ENCODE measurements at regions of chr11 and their contacts with region 1.

Region 1: DNA sequence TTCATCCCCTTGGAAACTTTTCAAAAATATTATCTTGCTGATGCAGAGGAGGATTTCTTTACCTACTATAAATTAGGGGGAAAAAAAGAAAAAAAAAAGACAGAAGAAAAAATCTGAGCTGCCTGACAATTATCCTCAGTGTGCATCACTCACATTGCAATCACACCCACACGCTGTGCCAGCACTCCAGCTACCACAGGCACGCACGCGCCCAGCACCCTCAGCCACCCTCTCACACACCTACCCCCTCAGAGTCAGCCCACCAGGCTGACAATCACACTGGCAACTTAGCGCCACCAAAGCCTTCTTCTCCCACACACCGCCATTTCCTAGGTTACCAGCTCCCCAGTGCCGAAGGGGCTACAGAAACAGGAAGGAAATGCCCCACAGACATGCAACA is 236.1 kb downstream of the KCNA4 start:
- DNase-seq: peak in 4 of 5 donors; percentile 14 to 65 (median 25)
- ATAC-seq: peak; percentile 66 to 82 (median 77)
- H3K4me3 ChIP-seq: peak overlapping the region in 3 of 12 donors; percentile 25 to 33 (median 32)
- H3K27ac ChIP-seq: peak overlapping the region; percentile 17 to 78 (median 67)
- H3K4me1 ChIP-seq: peaks cover 0 to 37% (median 0%) of the 10 kb centered on the region in 12 donors
- H3K27me3 ChIP-seq: no peaks in the 10 kb centered on the region
- CTCF ChIP-seq: no peak
- POLR2A ChIP-seq: no peak

Region 2: DNA sequence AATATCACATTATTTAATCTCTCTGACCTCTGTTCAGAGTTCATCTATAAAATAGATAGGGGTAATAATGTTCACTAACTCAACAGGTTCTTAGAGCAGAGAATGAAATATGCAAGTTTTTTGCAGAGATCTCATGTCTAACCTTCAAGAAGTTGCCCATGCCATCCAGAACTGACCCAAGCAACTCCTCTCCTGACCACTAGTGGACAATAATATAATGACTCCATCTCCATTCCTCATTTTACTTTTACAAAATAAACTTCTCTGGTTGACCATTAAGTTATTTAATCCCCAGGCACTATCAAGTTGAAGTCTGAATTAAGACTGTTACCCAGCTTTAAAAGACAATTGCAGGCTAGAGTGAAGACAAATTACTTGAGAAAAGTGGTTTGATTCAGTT is 146.5 kb before region 1 on chr11:
- intact Hi-C with region 1: no loop called
- DNase-seq: no peak
- ATAC-seq: no peak
- H3K4me3 ChIP-seq: no peak overlapping the region
- H3K27ac ChIP-seq: no peak overlapping the region
- H3K4me1 ChIP-seq: no peaks in the 10 kb centered on the region
- H3K27me3 ChIP-seq: no peaks in the 10 kb centered on the region
- CTCF ChIP-seq: peak in 10 of 12 donors; percentile 8 to 44 (median 26)
- POLR2A ChIP-seq: no peak

Region 3: DNA sequence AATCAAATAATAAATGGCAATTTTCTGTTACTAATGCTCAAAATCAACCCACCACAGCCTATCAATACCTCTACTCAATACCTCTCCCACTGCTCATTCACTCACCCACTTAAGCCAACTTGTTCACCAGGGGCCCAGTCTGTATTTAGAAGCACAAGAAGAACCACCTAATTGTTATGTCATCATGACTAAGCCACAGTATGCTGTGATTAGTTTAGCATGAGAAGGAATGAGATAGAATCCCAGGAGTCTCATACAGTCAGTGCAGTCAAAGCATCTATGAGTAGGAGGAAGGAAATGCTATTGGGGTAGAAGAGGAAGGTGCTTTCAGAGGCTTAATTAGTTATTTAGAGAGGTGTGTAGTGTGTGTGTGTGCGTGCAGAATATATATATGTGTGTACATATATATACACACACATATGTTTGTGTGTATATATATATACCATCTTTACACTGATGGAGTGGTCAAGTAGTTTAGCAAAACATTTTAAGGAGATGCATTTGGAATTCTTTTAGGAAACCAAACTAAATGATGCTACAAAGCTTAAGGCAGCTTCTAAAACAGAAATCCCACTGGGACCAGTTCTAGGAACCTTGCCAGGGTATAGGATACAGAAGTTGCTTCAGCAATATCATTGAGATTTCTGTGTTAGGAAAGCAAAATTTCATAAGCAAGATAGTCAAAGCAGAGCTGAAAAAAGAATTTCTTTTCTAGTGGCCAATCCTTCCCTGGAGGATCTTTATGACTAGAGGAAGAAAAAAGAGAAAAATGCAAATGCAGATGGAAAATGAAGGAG is 208.6 kb after region 1 on chr11:
- intact Hi-C with region 1: loop called in 1 of 10 experiments (anchors 10 kb)
- DNase-seq: no peak
- ATAC-seq: peak in 2 of 4 donors; percentile 32 to 39
- H3K4me3 ChIP-seq: no peak overlapping the region
- H3K27ac ChIP-seq: no peak overlapping the region
- H3K4me1 ChIP-seq: peaks cover 0 to 20% (median 0%) of the 10 kb centered on the region in 12 donors
- H3K27me3 ChIP-seq: no peaks in the 10 kb centered on the region
- CTCF ChIP-seq: no peak
- POLR2A ChIP-seq: no peak

Region 4: DNA sequence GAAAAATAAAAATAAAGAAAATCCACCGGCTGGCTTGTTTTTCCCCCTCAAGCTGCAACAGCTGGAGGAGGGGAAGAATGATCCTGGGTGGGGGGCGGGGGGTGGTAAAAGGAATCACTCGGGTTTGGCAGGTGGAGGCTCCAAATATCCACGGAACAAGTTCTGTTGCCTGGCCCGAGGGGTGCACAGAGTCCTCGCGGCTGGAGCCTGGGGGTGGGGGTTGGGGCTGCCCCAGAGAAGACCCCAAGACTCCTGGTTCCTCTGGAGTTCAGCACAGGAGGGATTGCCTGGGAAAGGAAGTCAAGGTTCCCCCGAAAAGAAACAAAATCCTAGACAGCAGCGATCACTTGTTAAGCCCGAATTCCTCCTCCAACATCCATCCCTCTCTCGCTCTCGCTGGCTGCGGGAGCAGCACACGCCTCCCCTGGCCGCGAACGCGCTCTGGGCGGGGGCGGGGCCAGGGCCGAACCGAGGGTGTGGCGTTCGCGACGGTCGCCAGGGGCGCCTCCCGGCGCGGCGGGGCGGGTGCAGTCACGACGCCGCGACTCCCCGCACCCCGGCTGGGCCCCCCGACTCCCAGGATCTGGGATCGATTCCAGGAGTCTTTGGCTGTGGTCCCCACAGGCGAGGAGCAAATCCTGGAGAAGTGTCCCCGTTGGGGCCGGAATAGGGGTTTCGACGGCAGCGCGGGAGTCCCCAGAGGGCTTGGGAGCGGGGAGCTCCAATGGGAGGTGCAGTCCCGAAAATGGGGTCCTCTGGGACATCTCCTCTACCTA is 236.0 kb after region 1 on chr11 and contains the start of gene KCNA4:
- intact Hi-C with region 1: loop called in 2 of 10 experiments (anchors 10 kb)
- DNase-seq: peak; percentile 31 to 64 (median 42)
- ATAC-seq: peak; percentile 74 to 95 (median 91)
- H3K4me3 ChIP-seq: peak within 1 kb of the TSS; percentile 22 to 75 (median 57)
- H3K27ac ChIP-seq: peak within 1 kb of the TSS in 7 of 12 donors; percentile 14 to 73 (median 37)
- H3K4me1 ChIP-seq: peaks cover 0 to 9% (median 0%) of the 10 kb centered on the region in 12 donors
- H3K27me3 ChIP-seq: peaks cover 0 to 41% (median 9%) of the 10 kb centered on the region in 9 donors
- CTCF ChIP-seq: peak in 11 of 12 donors; percentile 11 to 51 (median 34)
- POLR2A ChIP-seq: no peak
- total RNA-seq, gene KCNA4: 3.2 to 12.2 (median 7.1) TPM

Measured in heart left ventricle (tissue), 16 donors.